Caki2 (cell line): ENCODE measurements at regions of chr13 and their contacts with region 1.

Region 1: GRCh38 chr13:24148399-24149305 is 11.9 kb upstream of the SPATA13 start:
- DNase-seq: peak; percentile 90

Region 2: DNA sequence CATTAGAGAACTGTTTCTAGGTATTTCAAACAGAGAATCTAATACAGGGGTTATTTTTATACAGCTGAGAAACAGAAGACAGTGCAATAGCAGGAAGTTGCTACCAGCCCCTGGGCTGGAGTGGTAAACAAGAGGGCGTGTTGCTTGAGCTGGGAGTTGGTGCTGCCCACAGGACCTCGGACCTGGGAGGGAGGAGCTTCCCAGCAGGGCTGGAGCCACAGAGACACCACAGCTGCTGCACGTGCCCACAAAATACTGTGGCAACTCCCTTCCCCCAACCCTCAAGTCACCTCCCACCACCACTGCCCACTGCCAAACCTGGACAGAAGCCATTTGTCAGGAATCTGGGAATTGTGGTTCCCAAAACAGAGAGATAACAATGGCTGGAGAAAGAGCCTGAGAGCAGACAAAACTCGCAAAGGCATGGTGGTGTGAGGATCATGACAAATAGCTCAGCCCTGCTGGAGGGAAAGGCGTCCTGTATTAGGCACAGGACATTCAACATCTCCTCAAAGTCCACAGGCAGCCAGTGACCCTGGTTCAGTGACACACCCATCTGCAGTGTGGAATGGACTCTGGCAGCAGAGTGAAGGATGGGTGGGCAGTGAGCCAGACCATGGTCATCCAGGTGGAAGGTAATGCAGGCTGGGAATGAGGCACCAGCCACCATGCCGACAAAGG is 69.1 kb after region 1 on chr13:
- in situ Hi-C with region 1: loop called (anchors 10 kb)
- DNase-seq: no peak